IMR-90 (cell line): ENCODE measurements at regions of chr1 and their contacts with region 1.

Region 1: DNA sequence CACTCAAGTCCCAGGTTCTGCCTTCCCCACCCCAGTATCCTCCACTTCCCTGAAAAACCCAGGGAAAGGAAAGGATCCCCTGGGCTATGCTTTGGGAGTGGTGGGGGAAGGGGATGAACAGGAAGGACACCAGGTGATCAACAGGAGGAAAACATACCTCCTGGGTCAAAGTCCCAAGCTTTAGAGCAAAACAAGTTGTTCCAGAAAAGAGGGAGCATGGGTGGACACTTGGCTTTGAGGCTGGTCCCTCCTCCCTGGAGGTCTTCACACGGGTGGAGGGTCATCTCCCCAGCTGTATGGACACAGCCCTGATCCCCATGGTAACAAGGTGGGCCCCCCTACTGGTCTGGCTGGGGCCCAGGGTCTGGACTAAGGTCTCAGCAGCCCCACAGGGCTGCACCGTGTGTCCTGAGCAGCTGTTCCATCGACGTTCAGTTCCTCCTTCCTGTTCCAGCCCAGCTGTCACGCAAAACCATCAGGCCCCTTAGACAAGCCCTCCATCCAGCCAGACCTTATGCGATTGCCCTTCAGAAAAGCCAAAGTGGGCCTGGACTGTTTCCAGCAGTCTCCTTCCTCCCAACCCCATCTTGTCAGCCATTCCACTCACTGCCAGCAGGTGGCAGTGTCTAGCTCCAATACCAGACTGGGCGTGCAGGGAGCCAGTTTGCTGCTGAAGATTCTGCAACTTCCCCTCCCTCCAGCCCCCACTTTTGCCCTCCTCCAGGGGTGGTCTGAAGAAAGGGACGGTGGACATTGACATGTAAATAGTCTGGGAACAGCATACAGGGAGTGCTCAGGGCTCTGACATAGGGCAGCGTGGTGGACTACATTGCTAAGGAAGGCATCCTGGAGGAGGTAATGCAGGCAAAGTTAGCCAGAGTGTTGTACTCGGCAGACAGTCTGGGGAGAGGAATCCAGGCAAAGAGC is 2.9 kb upstream of the PDZK1IP1 start:
- DNase-seq: peak; percentile 53
- ATAC-seq: peak; percentile 79
- H3K4me3 ChIP-seq: no peak overlapping the region
- H3K27ac ChIP-seq: no peak overlapping the region
- H3K4me1 ChIP-seq: peaks cover 2% of the 10 kb centered on the region; the same call in 1 of the 2 replicates
- H3K27me3 ChIP-seq: peaks cover 6% of the 10 kb centered on the region
- CTCF ChIP-seq: peak; percentile 91
- POLR2A ChIP-seq: no peak
- RAD21 ChIP-seq: peak; percentile 78

Region 2: GRCh38 chr1:47262787-47263413 is 70.2 kb after region 1 on chr1:
- CTCF ChIA-PET with region 1: interaction called, 23 read pairs
- POLR2A ChIA-PET with region 1: no interaction called
- dilution Hi-C with region 1: no loop called
- in situ Hi-C with region 1: no loop called
- intact Hi-C with region 1: loop called (anchors 1 kb)
- DNase-seq: peak; percentile 38
- ATAC-seq: peak; percentile 73
- H3K4me3 ChIP-seq: no peak overlapping the region
- H3K27ac ChIP-seq: no peak overlapping the region
- H3K4me1 ChIP-seq: no peaks in the 10 kb centered on the region
- H3K27me3 ChIP-seq: no peaks in the 10 kb centered on the region
- CTCF ChIP-seq: peak; percentile 56
- POLR2A ChIP-seq: no peak
- RAD21 ChIP-seq: peak; percentile 51

Region 3: DNA sequence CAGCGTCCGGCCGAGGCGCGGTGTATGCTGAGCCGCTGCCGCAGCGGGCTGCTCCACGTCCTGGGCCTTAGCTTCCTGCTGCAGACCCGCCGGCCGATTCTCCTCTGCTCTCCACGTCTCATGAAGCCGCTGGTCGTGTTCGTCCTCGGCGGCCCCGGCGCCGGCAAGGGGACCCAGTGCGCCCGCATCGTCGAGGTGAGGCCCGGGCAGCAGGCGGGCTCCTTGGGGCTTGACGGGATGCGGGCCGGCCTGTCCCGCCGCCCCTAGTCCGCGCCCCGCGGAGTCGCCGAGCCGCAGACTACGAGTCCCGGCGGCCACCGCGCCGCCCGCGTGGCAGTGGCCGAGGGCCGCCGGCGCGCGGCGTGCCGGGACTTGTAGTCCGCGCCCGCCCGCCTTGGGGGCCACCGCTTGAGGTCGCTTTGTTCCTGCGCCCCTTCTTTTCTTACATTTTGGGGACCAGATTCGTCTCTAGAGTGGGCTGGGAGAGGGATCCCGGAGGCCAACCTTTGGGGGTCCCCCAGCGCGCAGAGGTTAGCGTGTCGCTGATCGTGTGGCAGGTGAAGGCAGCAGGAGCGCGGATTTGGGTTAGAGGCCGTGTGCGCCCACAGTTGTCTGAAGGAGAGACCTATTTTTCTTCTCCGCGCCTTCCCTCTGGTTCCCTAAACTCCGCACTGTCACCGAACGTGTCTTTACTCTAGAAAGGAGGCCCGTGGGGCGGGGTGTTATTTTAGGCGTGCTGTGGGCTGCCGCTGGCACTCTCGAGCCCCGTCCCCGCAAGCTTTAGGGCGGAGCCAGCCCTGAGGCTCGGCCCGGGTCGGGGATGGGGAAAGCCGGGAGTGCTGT is 141.4 kb after region 1 on chr1:
- CTCF ChIA-PET with region 1: interaction called, 3 read pairs
- POLR2A ChIA-PET with region 1: no interaction called
- dilution Hi-C with region 1: no loop called
- in situ Hi-C with region 1: no loop called
- intact Hi-C with region 1: loop called (anchors 5 kb)
- DNase-seq: peak; percentile 74
- ATAC-seq: peak; percentile 92
- H3K4me3 ChIP-seq: peak overlapping the region; percentile 86
- H3K27ac ChIP-seq: peak overlapping the region; percentile 88
- H3K4me1 ChIP-seq: peaks cover 6% of the 10 kb centered on the region
- H3K27me3 ChIP-seq: no peaks in the 10 kb centered on the region
- CTCF ChIP-seq: peak; percentile 7; the same call in 1 of the 2 replicates
- POLR2A ChIP-seq: peak; percentile 59
- RAD21 ChIP-seq: no peak

Region 4: DNA sequence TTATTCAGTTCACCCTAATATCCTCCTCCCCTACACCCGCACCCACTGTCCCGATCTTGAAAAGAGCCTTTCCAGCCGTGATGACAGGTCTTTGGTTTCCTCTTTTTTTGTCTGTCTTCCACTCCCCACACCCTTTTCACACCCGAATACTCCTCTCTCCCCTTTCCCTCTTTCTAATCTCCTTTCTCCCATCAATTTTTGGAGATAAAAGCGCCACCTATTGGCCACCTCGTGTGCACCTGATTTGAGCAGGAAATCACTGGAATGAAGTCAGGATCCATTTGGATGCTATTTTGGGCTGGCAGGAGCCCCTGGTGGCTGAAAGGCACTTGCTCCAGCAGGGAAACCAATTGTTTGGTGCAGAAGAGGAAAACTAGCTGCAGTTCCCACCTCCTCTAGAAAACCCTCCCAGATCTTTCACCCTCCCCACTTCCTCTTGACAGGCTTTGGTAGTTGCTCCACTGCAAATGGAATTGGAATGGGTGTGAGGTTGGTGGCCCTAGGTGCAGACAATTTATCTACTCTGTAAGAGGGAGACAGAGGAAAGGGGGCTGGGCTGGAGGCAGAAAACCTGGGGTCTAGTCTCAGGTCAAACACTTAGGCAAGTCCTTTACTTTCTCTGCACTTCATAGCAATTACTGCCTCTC is 231.7 kb after region 1 on chr1:
- CTCF ChIA-PET with region 1: no interaction called
- POLR2A ChIA-PET with region 1: no interaction called
- dilution Hi-C with region 1: no loop called
- in situ Hi-C with region 1: no loop called
- intact Hi-C with region 1: loop called (anchors 1 kb)
- DNase-seq: peak; percentile 67
- ATAC-seq: peak; percentile 75
- H3K4me3 ChIP-seq: no peak overlapping the region
- H3K27ac ChIP-seq: no peak overlapping the region
- H3K4me1 ChIP-seq: no peaks in the 10 kb centered on the region
- H3K27me3 ChIP-seq: peaks cover 5% of the 10 kb centered on the region; the same call in 1 of the 2 replicates
- CTCF ChIP-seq: peak; percentile 89
- POLR2A ChIP-seq: no peak
- RAD21 ChIP-seq: peak; percentile 74

Region 5: DNA sequence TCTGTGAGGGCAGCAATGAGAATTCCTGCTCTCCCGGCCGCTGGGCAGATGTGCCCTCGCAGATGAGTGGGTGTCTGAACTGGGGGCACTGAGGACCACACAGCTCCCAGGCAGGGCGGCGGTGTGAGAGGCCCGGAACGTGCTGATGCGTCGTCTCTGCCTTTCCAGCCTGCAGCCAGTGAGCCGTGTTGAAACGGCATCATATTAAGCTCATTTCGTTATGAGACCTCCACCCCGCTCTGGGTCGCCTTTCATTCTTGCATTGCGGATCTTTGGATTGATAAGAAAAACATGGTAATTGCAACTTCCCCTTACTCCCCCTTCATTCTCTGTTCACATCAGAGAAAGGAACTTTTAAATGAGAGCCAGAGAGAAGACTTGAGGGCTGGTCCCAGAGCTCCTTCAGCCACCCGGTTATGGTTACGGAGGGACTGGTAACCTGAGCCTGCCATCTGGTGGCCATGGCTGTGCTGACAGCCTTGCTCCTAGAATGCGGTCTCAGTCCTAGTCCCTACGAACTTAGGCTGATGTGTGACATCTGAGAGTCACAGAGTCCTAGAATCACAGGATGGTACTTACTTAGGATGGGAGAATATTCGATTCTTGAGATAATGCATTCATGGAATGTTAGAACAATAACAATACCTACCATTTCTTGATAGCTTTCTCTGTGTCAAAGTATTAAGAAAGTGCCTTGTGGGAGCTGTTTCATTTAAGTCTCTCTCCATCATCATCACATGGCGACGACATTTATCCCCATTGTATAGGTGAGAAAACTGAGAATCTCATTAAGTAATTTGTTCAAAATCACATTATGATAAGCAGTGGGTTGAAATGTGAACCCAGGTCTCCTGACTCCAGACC is 533.5 kb after region 1 on chr1:
- CTCF ChIA-PET with region 1: interaction called, 6 read pairs
- POLR2A ChIA-PET with region 1: no interaction called
- dilution Hi-C with region 1: no loop called
- in situ Hi-C with region 1: no loop called
- intact Hi-C with region 1: loop called (anchors 5 kb)
- DNase-seq: peak; percentile 63
- ATAC-seq: peak; percentile 98
- H3K4me3 ChIP-seq: no peak overlapping the region
- H3K27ac ChIP-seq: no peak overlapping the region
- H3K4me1 ChIP-seq: no peaks in the 10 kb centered on the region
- H3K27me3 ChIP-seq: peaks cover 21% of the 10 kb centered on the region
- CTCF ChIP-seq: peak; percentile 79
- POLR2A ChIP-seq: no peak
- RAD21 ChIP-seq: peak; percentile 66

Region 6: DNA sequence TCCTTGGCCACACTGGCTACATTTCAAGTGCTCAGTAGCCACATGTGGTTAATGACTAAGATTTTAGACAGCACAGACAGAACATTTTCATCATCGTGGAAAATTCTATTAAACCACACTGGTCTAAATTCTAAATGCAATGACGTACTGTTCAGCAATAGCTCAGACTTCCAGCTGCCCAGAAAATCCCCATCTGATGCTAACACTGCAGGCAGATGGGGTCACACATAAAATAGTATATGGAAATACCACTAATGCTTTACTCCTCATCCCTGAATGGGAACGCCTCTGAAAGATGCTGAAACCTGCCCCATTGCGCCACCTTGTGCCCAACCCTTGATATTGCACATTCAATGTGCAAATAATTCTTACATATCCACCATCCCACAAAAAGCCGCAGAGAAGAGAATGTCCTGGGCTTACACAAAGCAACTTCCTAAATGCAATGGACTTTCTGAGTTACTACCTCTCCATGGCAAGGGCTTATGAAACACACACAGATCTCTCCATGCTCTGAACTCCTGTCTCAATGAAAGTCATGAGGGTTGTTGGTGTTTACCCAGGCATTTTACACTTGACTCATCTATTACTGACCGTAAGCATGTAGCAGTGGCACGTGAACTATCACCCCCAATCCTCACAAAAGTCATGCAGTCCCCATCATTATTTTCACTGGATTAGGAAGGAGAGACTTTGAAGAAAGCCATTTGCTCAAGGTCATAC is 1009.5 kb after region 1 on chr1:
- CTCF ChIA-PET with region 1: no interaction called
- POLR2A ChIA-PET with region 1: no interaction called
- dilution Hi-C with region 1: no loop called
- in situ Hi-C with region 1: no loop called
- intact Hi-C with region 1: no loop called
- DNase-seq: peak; percentile 81
- ATAC-seq: peak; percentile 97
- H3K4me3 ChIP-seq: no peak overlapping the region
- H3K27ac ChIP-seq: no peak overlapping the region
- H3K4me1 ChIP-seq: no peaks in the 10 kb centered on the region
- H3K27me3 ChIP-seq: no peaks in the 10 kb centered on the region; the same call in 1 of the 2 replicates
- CTCF ChIP-seq: peak; percentile 87
- POLR2A ChIP-seq: no peak
- RAD21 ChIP-seq: peak; percentile 65